Activated CD4-positive, alpha-beta memory T cell treated with anti-CD3 and anti-CD28 coated beads for 36 hours (primary cell): ENCODE measurements at regions of chr12 and their contacts with region 1.

Region 1: GRCh38 chr12:1226951-1227350 is 235.9 kb downstream of the ERC1 start:
- DNase-seq: no peak
- H3K4me3 Mint-ChIP-seq: no peak overlapping the region
- H3K27ac Mint-ChIP-seq: no peak overlapping the region
- H3K4me1 Mint-ChIP-seq: peaks cover 19% of the 10 kb centered on the region
- H3K27me3 Mint-ChIP-seq: no peaks in the 10 kb centered on the region

Region 2: DNA sequence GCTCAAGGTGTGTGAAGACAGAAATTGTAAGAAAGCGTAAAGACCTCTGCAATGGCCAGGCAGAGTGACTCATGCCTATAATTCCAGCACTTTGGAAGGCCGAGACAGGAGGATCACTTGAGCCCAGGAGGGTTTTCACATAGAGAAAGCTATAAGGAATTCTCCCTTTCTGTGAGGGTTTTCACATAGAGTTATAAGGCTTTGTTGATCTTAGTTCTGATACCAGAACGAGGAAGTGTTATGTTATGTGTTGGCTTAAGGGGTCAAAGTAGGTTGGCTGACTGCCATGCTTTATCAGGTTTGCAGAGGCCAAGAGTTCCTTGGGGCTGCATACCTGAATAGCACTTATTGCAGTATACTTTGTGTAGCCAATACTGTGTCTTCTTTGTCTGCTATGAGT is 96.8 kb before region 1 on chr12:
- CTCF ChIA-PET with region 1: no interaction called
- POLR2A ChIA-PET with region 1: no interaction called
- intact Hi-C with region 1: loop called (anchors 1 kb)
- DNase-seq: no peak
- H3K4me3 Mint-ChIP-seq: no peak overlapping the region
- H3K27ac Mint-ChIP-seq: no peak overlapping the region
- H3K4me1 Mint-ChIP-seq: peaks cover 26% of the 10 kb centered on the region
- H3K27me3 Mint-ChIP-seq: no peaks in the 10 kb centered on the region

Region 3: GRCh38 chr12:1162081-1162760 is 64.7 kb before region 1 on chr12:
- CTCF ChIA-PET with region 1: no interaction called
- POLR2A ChIA-PET with region 1: no interaction called
- intact Hi-C with region 1: no loop called
- DNase-seq: no peak
- H3K4me3 Mint-ChIP-seq: no peak overlapping the region
- H3K27ac Mint-ChIP-seq: no peak overlapping the region
- H3K4me1 Mint-ChIP-seq: no peaks in the 10 kb centered on the region
- H3K27me3 Mint-ChIP-seq: no peaks in the 10 kb centered on the region

Region 4: GRCh38 chr12:1212526-1212925 is 14.4 kb before region 1 on chr12:
- CTCF ChIA-PET with region 1: interaction called, 11 read pairs
- POLR2A ChIA-PET with region 1: interaction called, 15 read pairs
- intact Hi-C with region 1: loop called (anchors 1 kb)
- DNase-seq: no peak
- H3K4me3 Mint-ChIP-seq: no peak overlapping the region
- H3K27ac Mint-ChIP-seq: no peak overlapping the region
- H3K4me1 Mint-ChIP-seq: peaks cover 12% of the 10 kb centered on the region
- H3K27me3 Mint-ChIP-seq: no peaks in the 10 kb centered on the region

Region 5: GRCh38 chr12:1325666-1326065 is 98.7 kb after region 1 on chr12:
- CTCF ChIA-PET with region 1: no interaction called
- POLR2A ChIA-PET with region 1: no interaction called
- intact Hi-C with region 1: loop called (anchors 2 kb)
- DNase-seq: no peak
- H3K4me3 Mint-ChIP-seq: no peak overlapping the region
- H3K27ac Mint-ChIP-seq: no peak overlapping the region
- H3K4me1 Mint-ChIP-seq: peaks cover 16% of the 10 kb centered on the region
- H3K27me3 Mint-ChIP-seq: no peaks in the 10 kb centered on the region

Region 6: DNA sequence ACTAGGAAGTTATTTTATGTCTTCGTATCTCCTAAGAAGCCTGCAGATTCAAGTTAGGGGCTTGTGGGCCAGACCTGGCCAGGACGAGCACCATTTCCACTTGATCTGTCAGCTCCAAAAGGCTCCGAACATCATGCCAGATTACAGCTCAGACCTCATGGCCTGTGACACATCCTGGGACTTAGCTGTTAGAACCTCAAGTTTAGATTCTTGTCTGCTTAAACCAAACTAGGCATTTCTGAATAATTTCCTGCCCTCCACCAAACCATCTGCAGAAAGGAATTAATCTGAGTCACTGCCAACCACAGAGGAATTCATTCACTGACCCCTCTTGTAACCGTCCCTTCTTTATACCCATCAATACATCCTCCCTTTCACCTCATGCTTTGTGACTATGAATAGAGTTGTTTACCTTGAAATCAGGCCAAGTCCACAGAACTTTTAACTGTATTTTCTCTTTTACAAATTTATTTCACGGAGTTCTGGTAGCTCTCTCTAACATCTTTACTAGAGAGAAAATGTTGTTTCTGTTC is 247.2 kb after region 1 on chr12:
- CTCF ChIA-PET with region 1: no interaction called
- POLR2A ChIA-PET with region 1: no interaction called
- intact Hi-C with region 1: no loop called
- DNase-seq: peak; percentile 47
- H3K4me3 Mint-ChIP-seq: no peak overlapping the region
- H3K27ac Mint-ChIP-seq: no peak overlapping the region
- H3K4me1 Mint-ChIP-seq: peaks cover 2% of the 10 kb centered on the region
- H3K27me3 Mint-ChIP-seq: no peaks in the 10 kb centered on the region